ENCODE measurements at regions of chr12 and their contacts with region 1.

Region 1: DNA sequence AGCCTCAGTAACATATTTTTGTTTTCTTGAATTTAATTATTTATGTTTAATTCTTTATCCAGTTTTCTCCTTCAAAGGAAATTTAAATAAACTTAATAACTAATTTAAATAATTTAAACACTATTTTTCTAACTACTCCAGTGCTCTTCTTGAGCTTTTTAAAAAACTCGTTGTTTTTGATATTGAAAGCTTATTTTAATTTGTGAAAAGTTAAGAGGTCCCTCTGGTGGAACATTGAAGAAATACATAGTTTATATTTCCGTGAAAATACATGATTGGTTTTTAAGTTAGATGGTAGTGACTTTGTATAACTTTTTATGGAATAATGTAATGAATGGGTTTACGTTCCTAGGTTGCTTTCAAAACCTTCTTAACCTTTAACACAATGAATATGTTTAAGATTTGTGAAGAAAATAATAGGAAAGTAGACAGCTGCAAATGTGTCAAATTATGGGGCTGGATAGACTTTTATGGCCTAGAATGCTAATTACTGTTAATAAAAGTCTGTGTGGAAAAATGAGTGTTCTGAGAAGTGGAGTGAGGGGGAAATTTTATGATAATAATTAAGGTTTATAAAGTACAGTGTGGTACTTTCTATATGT is 45.9 kb upstream of the MSRB3 start:
- DNase-seq: peak; percentile 56

Region 2: GRCh38 chr12:65121049-65121955 is 111.3 kb before region 1 on chr12 and contains the start of gene WIF1:
- in situ Hi-C with region 1: loop called (anchors 25 kb)
- DNase-seq: peak; percentile 46